Activated T-helper 1 cell treated with anti-CD3 and anti-CD28 coated beads, Interleukin-12 subunit alpha, Interleukin-12 subunit beta, Interleukin-2, Interleukin-4 antibody, amounts not matched to agents 30 ng/mL and 10 ng/mL and 1 ng/mL, durations not matched to agents 14 hours and 24 hours and 36 hours (primary cell): ENCODE measurements at regions of chr15 and their contacts with region 1.

Region 1: GRCh38 chr15:34056936-34057335 is 17.9 kb upstream of the AVEN start:
- DNase-seq: no peak
- H3K4me3 Mint-ChIP-seq: no peak overlapping the region
- H3K27ac Mint-ChIP-seq: no peak overlapping the region
- H3K4me1 Mint-ChIP-seq: no peaks in the 10 kb centered on the region
- H3K27me3 Mint-ChIP-seq: peaks cover 5% of the 10 kb centered on the region

Region 2: DNA sequence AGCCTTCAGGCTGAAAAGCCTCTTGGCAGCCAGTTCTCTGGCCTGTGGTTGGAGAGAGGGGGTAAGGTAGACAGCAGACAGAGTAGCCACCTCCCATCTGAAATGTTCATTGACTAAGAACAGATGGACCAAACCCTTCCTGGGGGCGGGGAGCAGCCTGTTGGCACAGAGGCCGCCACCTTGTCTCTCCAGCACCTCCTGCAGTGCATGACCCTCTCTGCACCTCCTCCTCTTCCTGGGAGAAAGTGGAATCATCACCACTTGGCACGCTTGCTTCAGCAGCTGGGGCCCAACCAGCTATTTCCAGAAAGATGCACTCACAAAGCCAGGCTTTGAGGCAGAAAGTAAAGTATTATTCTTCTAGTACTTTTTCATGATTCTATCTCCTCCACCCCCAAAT is 402.1 kb before region 1 on chr15:
- intact Hi-C with region 1: no loop called
- DNase-seq: no peak
- H3K4me3 Mint-ChIP-seq: no peak overlapping the region
- H3K27ac Mint-ChIP-seq: no peak overlapping the region
- H3K4me1 Mint-ChIP-seq: no peaks in the 10 kb centered on the region
- H3K27me3 Mint-ChIP-seq: no peaks in the 10 kb centered on the region

Region 3: GRCh38 chr15:33671456-33671855 is 385.5 kb before region 1 on chr15:
- intact Hi-C with region 1: no loop called
- DNase-seq: no peak
- H3K4me3 Mint-ChIP-seq: no peak overlapping the region
- H3K27ac Mint-ChIP-seq: no peak overlapping the region
- H3K4me1 Mint-ChIP-seq: no peaks in the 10 kb centered on the region
- H3K27me3 Mint-ChIP-seq: peaks cover 9% of the 10 kb centered on the region

Region 4: GRCh38 chr15:34084086-34084485 is 27.1 kb after region 1 on chr15:
- intact Hi-C with region 1: no loop called
- DNase-seq: no peak
- H3K4me3 Mint-ChIP-seq: no peak overlapping the region
- H3K27ac Mint-ChIP-seq: no peak overlapping the region
- H3K4me1 Mint-ChIP-seq: no peaks in the 10 kb centered on the region
- H3K27me3 Mint-ChIP-seq: no peaks in the 10 kb centered on the region

Region 5: GRCh38 chr15:34109797-34110663 is 53.1 kb after region 1 on chr15:
- intact Hi-C with region 1: loop called (anchors 1 kb)
- DNase-seq: no peak
- H3K4me3 Mint-ChIP-seq: no peak overlapping the region
- H3K27ac Mint-ChIP-seq: no peak overlapping the region
- H3K4me1 Mint-ChIP-seq: peaks cover 6% of the 10 kb centered on the region
- H3K27me3 Mint-ChIP-seq: peaks cover 3% of the 10 kb centered on the region